Right ventricle myocardium superior (tissue), 1 donor: ENCODE measurements at regions of chr6 and their contacts with region 1.

Region 1: GRCh38 chr6:30883685-30884520 is at the start of gene DDR1:
- DNase-seq: peak; percentile 84
- ATAC-seq: peak; percentile 80
- total RNA-seq, gene DDR1: 23.2 TPM

Region 2: DNA sequence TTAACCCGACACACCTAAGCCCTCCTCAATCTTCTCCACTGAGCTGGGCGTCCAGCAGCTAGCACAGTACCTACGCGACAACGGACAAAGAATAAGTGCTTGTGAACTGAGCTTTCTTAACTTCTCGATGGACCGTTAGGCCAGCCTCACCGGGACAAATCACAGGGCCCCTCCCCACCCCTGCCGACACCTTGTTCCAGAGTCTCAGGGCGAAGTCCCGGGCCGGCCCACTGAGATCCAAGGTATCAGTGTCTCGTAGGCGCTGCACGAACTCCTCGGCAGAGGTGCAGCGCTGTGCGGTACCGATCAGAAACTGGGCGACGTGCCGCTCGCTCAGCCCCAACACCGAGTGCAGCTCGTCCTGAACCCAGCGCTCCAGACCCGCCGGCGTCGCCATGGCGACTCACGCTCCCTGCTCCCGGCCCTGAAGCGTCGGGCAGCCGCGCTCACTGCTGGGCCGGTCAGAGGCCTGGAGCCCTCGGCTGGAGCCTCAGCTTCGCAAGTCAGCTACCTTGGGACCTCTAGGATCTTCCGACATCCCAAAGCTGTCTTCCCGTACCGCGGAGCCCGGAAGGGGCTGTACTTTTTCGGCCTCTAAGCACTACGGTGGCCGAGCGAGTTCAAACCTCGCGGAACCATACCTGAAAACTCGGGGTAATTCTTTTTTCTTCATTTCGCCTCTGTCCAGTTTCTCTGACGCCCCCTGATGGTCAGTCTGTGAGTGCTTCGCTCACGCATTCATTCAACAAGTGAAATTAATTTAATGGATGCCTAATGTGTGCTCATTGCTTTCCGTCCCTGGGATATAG is 211.3 kb before region 1 on chr6 and contains the start of gene DHX16:
- intact Hi-C with region 1: loop called (anchors 10 kb)
- DNase-seq: peak; percentile 98
- ATAC-seq: peak; percentile 95
- total RNA-seq, gene DHX16: 20.5 TPM

Region 3: DNA sequence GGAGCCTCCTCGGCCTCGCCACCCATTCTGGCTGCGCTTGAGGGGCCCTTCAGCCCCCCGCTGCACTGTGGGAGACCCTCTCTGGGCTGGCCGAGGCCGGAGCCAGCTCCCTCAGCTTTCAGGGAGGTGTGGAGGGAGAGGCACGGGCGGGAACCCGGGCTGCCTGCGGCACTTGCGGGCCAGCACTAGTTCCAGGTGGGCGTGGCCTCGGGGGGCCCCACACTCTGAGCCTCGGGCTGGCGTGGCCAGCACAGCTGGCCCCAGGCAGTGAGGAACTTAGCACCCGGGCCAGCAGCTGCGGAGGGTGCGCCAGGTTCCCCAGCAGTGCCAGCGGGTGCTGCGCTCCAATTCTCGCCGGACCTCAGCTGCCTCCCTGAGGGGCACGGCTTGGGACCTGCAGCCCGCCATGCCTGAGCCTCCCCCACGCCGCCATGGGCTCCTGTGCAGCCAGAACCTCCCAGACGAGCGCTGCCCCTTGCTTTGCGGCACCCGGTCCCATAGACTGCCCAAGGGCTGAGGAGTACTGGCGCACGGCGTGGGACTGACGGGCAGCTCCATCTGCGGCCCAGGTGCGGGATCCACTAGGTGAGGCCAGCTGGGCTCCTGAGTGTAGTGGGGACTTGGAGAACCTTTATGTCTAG is 132.9 kb after region 1 on chr6:
- intact Hi-C with region 1: no loop called
- DNase-seq: no peak
- ATAC-seq: no peak